ENCODE measurements at regions of chr10 and their contacts with region 1.

Region 1: DNA sequence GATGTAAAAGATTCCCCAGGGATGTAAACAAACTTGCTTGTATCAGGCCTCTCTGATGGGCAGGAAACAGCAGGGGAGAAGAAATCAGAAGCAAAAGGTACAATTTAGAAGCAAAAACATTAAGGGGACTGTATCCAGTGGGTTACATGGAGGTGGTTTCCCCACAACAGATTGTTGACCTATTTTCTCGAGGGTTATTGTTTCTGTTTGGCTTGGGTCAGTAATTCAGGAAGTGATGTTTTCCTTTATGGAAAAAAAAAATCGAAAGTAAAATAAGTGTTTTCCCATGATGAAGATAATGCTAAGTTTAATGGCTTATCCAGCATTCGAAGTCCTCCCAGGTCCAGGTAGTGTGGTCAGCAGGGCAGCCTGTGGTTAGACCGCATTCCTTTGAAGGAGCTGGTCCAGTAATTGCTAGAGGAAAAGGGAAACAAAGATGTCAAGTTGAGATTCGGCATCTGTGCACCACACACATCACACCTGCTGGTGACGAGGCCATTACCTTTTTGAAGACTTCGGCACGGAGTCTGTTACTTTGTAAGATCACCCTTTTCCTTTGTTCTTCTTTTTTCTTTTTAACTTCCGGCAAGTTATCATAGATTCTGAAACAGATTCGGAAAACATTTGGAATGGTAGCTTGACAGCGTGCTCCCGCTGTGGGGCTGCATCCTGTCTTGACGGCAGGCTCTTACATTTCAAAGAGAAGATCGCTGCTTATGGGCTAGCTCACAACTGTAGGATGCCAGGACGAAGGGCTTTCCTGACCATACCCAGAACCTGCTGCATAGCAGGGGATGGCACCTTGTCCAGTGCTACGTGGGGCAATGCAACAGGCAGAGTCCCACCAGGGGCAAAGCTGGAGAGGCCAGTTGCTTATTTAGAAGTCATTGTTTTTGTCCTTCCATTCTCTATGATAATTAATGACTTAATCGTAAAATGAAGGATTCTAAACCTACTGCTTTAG is 37.5 kb upstream of the ADAM12 start:
- DNase-seq: no peak
- ATAC-seq: no peak

Region 2: DNA sequence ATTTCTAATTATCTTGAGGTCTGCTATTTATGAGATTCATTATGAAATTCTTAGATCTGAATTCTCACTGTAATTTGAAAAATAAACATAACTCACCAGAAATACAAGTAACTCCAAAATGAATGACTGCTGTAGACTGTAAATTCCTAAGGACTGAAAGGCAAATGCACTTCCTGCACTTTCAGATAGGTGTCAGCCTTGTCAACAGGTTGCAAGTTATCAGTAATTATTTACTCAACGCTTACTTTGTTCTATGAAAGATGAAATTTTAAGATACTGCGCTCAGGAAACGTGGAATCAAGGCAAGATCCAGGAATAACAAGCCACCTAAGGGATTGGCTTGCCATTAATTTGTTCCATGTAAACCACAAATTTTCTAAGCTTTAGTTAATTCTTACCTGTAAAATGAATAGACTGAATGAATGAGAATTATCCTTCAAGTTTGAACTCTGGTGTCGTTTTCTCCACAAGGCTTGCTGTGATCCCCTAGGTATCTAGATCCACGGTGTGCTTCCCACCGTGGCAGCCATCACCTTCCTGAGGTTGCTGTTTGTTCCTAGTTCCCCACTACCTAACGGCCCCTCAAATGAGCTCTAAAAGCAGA is 557.3 kb before region 1 on chr10:
- intact Hi-C with region 1: no loop called
- DNase-seq: no peak
- ATAC-seq: no peak

Region 3: GRCh38 chr10:126392068-126392467 is 33.7 kb before region 1 on chr10:
- intact Hi-C with region 1: loop called (anchors 2 kb)
- DNase-seq: no peak
- ATAC-seq: no peak

Region 4: DNA sequence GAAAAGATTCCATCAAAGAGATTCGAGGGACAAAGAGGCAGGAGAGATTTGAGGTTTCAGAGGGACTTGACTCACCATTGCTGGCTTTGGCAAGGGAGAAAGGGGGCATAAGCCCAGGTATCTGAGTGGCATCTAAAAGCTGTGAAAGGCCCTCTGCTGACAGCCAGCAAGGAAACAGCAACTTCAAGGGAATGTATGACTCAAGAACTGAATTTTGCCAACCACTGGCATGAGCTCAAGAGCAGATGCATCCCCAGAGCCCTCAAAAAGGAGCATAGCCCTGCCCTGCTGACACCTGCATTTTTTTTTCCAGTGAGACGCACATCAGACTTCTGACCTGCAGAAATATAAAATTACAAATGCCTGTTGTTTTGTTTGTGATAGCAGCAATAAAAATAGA is 17.9 kb before region 1 on chr10:
- intact Hi-C with region 1: no loop called
- DNase-seq: no peak
- ATAC-seq: no peak

Region 5: GRCh38 chr10:126468876-126469643 is 43.3 kb after region 1 on chr10:
- intact Hi-C with region 1: no loop called
- DNase-seq: no peak
- ATAC-seq: no peak

Measured in sciatic nerve (tissue), 2 donors.